ENCODE measurements at regions of chr3 and their contacts with region 1.

Region 1: GRCh38 chr3:33440323-33441232 is at the start of gene UBP1:
- DNase-seq: peak; percentile 99 to 100
- ATAC-seq: peak; percentile 90 to 93
- H3K4me3 ChIP-seq: peak within 1 kb of the TSS; percentile 70 to 91 (median 80)
- H3K27ac ChIP-seq: peak within 1 kb of the TSS; percentile 92 to 95 (median 94)
- H3K4me1 ChIP-seq: peaks cover 36 to 39% of the 10 kb centered on the region in 2 donors
- H3K27me3 ChIP-seq: no peaks in the 10 kb centered on the region
- CTCF ChIP-seq: peak in 1 of 5 experiments; percentile 11
- POLR2A ChIP-seq: peak; percentile 62 to 83
- total RNA-seq, gene UBP1: 19.1 to 28.9 (median 24.2) TPM

Region 2: GRCh38 chr3:33113772-33114621 is 326.6 kb before region 1 on chr3 and contains the start of gene CRTAP:
- in situ Hi-C with region 1: loop called in 1 of 4 experiments (anchors 10 kb)
- intact Hi-C with region 1: loop called (anchors 2 kb)
- DNase-seq: peak; percentile 92 to 97
- ATAC-seq: peak; percentile 76 to 80
- H3K4me3 ChIP-seq: peak within 1 kb of the TSS; percentile 69 to 90 (median 70)
- H3K27ac ChIP-seq: peak within 1 kb of the TSS; percentile 87 to 96 (median 94)
- H3K4me1 ChIP-seq: peaks cover 9% of the 10 kb centered on the region in 2 donors
- H3K27me3 ChIP-seq: no peaks in the 10 kb centered on the region
- CTCF ChIP-seq: peak in 1 of 5 experiments; percentile 17
- POLR2A ChIP-seq: peak; percentile 38 to 48
- total RNA-seq, gene CRTAP: 75.2 to 107 (median 83.1) TPM

Region 3: GRCh38 chr3:33372218-33373081 is 68.1 kb before region 1 on chr3:
- in situ Hi-C with region 1: no loop called
- intact Hi-C with region 1: no loop called
- DNase-seq: no peak
- ATAC-seq: peak in 1 of 2 donors; percentile 66
- H3K4me3 ChIP-seq: no peak overlapping the region
- H3K27ac ChIP-seq: no peak overlapping the region
- H3K4me1 ChIP-seq: peaks cover 4% of the 10 kb centered on the region in 2 donors
- H3K27me3 ChIP-seq: no peaks in the 10 kb centered on the region
- CTCF ChIP-seq: peak; percentile 69 to 89 (median 79)
- POLR2A ChIP-seq: no peak

Region 4: GRCh38 chr3:33425453-33425852 is 15.1 kb before region 1 on chr3:
- in situ Hi-C with region 1: no loop called
- intact Hi-C with region 1: loop called (anchors 1 kb)
- DNase-seq: no peak
- ATAC-seq: peak in 1 of 2 donors; percentile 37
- H3K4me3 ChIP-seq: no peak overlapping the region
- H3K27ac ChIP-seq: peak overlapping the region; percentile 77 to 84 (median 80)
- H3K4me1 ChIP-seq: peaks cover 37 to 47% of the 10 kb centered on the region in 2 donors
- H3K27me3 ChIP-seq: no peaks in the 10 kb centered on the region
- CTCF ChIP-seq: no peak
- POLR2A ChIP-seq: no peak

Region 5: GRCh38 chr3:33490641-33491241 is 50.2 kb after region 1 on chr3:
- in situ Hi-C with region 1: no loop called
- intact Hi-C with region 1: no loop called
- DNase-seq: no peak
- ATAC-seq: no peak
- H3K4me3 ChIP-seq: no peak overlapping the region
- H3K27ac ChIP-seq: no peak overlapping the region
- H3K4me1 ChIP-seq: no peaks in the 10 kb centered on the region
- H3K27me3 ChIP-seq: no peaks in the 10 kb centered on the region
- CTCF ChIP-seq: no peak
- POLR2A ChIP-seq: no peak

Region 6: GRCh38 chr3:33798411-33799201 is 358.0 kb after region 1 on chr3 and contains the start of gene PDCD6IP:
- in situ Hi-C with region 1: no loop called
- intact Hi-C with region 1: loop called (anchors 5 kb)
- DNase-seq: peak; percentile 90 to 92
- ATAC-seq: peak; percentile 96
- H3K4me3 ChIP-seq: peak within 1 kb of the TSS; percentile 93 to 100 (median 95)
- H3K27ac ChIP-seq: peak within 1 kb of the TSS; percentile 92 to 98 (median 98)
- H3K4me1 ChIP-seq: peaks cover 32 to 46% of the 10 kb centered on the region in 2 donors
- H3K27me3 ChIP-seq: no peaks in the 10 kb centered on the region
- CTCF ChIP-seq: peak in 4 of 5 experiments; percentile 9 to 35 (median 26)
- POLR2A ChIP-seq: peak; percentile 89 to 93
- total RNA-seq, gene PDCD6IP: 93.9 to 181 (median 127) TPM